ENCODE measurements at regions of chr9 and their contacts with region 1.

Region 1: GRCh38 chr9:130893341-130894101 is 3.1 kb downstream of the QRFP start:
- DNase-seq: no peak
- H3K4me3 ChIP-seq: no peak overlapping the region
- H3K27ac ChIP-seq: no peak overlapping the region
- H3K4me1 ChIP-seq: no peaks in the 10 kb centered on the region
- CTCF ChIP-seq: no peak

Region 2: GRCh38 chr9:130549093-130549735 is 344.3 kb before region 1 on chr9:
- CTCF ChIA-PET with region 1: no interaction called
- POLR2A ChIA-PET with region 1: no interaction called
- intact Hi-C with region 1: no loop called
- DNase-seq: peak; percentile 58
- H3K4me3 ChIP-seq: no peak overlapping the region
- H3K27ac ChIP-seq: no peak overlapping the region
- H3K4me1 ChIP-seq: no peaks in the 10 kb centered on the region
- CTCF ChIP-seq: no peak

Region 3: GRCh38 chr9:130578865-130579737 is 314.4 kb before region 1 on chr9 and contains the start of gene FUBP3:
- CTCF ChIA-PET with region 1: interaction called, 24 read pairs
- POLR2A ChIA-PET with region 1: no interaction called
- intact Hi-C with region 1: no loop called
- DNase-seq: peak; percentile 92
- H3K4me3 ChIP-seq: peak within 1 kb of the TSS; percentile 96
- H3K27ac ChIP-seq: peak within 1 kb of the TSS; percentile 31
- H3K4me1 ChIP-seq: peaks cover 22% of the 10 kb centered on the region
- CTCF ChIP-seq: no peak
- total RNA-seq, gene FUBP3: 62.5 and 78.3 TPM in 2 replicates

Region 4: GRCh38 chr9:130880599-130881220 is 12.8 kb before region 1 on chr9:
- CTCF ChIA-PET with region 1: no interaction called
- POLR2A ChIA-PET with region 1: no interaction called
- intact Hi-C with region 1: no loop called
- DNase-seq: no peak
- H3K4me3 ChIP-seq: no peak overlapping the region
- H3K27ac ChIP-seq: no peak overlapping the region
- H3K4me1 ChIP-seq: no peaks in the 10 kb centered on the region
- CTCF ChIP-seq: no peak

Region 5: GRCh38 chr9:130908146-130908877 is 14.8 kb after region 1 on chr9:
- CTCF ChIA-PET with region 1: no interaction called
- POLR2A ChIA-PET with region 1: no interaction called
- intact Hi-C with region 1: no loop called
- DNase-seq: no peak
- H3K4me3 ChIP-seq: no peak overlapping the region
- H3K27ac ChIP-seq: no peak overlapping the region
- H3K4me1 ChIP-seq: no peaks in the 10 kb centered on the region
- CTCF ChIP-seq: no peak

Region 6: GRCh38 chr9:132108728-132109127 is 1215.2 kb after region 1 on chr9:
- CTCF ChIA-PET with region 1: no interaction called
- POLR2A ChIA-PET with region 1: no interaction called
- intact Hi-C with region 1: loop called (anchors 5 kb)
- DNase-seq: peak; percentile 18
- H3K4me3 ChIP-seq: no peak overlapping the region
- H3K27ac ChIP-seq: no peak overlapping the region
- H3K4me1 ChIP-seq: peaks cover 22% of the 10 kb centered on the region
- CTCF ChIP-seq: no peak